ENCODE measurements at regions of chr22 and their contacts with region 1.

Region 1: GRCh38 chr22:46071451-46072109 is 78.7 kb upstream of the PPARA start:
- DNase-seq: peak; percentile 96 to 97 (median 97)
- ATAC-seq: peak; percentile 38 to 59
- H3K4me3 ChIP-seq: peak overlapping the region; percentile 92
- H3K27ac ChIP-seq: peak overlapping the region; percentile 95
- H3K4me1 ChIP-seq: peaks cover 9% of the 10 kb centered on the region
- H3K27me3 ChIP-seq: no peaks in the 10 kb centered on the region

Region 2: GRCh38 chr22:46006379-46007002 is 65.1 kb before region 1 on chr22:
- intact Hi-C with region 1: loop called in 3 of 4 experiments (anchors 5 to 10 kb)
- DNase-seq: peak; percentile 96 to 98 (median 98)
- ATAC-seq: peak; percentile 69 to 75
- H3K4me3 ChIP-seq: no peak overlapping the region
- H3K27ac ChIP-seq: peak overlapping the region; percentile 88
- H3K4me1 ChIP-seq: peaks cover 7% of the 10 kb centered on the region
- H3K27me3 ChIP-seq: no peaks in the 10 kb centered on the region

Region 3: DNA sequence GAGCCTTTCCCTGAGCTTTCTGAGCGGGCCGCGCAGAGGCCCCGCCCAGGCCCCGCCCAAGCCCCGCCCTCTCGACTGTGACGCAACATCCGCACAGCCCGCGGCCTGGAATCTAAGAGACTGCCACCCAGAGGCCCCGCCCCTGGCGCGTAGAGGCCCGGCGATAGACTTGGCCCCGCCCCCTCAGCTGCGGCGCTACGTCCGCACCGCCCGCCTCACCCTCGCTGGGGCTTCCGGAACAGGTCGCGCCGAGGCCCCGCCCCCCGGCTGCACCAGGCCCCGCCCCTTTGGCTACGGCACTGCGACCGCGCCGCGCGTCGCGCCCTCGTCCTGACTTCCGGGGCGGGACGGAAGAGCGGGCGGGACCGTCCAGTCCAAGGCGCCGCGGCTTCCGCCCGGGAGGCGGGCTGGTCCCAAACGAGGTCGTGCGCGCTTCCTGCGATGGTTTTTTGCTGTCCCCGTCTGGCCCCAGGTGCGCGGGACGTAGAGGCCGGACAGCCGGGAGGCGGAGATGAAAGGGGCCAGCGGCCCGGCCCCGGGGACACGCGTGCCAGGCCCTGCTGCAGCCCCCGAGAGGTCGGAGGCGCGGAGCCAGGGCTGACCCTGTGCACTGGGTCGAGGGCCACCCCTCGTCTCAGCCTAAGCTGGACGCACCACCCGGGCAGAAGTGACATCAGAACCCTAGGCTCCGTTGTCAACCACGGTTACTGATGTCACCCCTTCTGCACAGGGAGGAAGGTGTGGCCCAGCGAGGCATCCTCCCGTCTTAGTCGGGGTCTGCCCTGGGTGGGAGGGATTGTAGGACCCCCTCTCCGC is 35.6 kb before region 1 on chr22:
- intact Hi-C with region 1: loop called in 2 of 4 experiments (anchors 5 kb)
- DNase-seq: peak; percentile 100
- ATAC-seq: peak; percentile 97
- H3K4me3 ChIP-seq: peak overlapping the region; percentile 59
- H3K27ac ChIP-seq: peak overlapping the region; percentile 88
- H3K4me1 ChIP-seq: peaks cover 5% of the 10 kb centered on the region
- H3K27me3 ChIP-seq: no peaks in the 10 kb centered on the region

Region 4: DNA sequence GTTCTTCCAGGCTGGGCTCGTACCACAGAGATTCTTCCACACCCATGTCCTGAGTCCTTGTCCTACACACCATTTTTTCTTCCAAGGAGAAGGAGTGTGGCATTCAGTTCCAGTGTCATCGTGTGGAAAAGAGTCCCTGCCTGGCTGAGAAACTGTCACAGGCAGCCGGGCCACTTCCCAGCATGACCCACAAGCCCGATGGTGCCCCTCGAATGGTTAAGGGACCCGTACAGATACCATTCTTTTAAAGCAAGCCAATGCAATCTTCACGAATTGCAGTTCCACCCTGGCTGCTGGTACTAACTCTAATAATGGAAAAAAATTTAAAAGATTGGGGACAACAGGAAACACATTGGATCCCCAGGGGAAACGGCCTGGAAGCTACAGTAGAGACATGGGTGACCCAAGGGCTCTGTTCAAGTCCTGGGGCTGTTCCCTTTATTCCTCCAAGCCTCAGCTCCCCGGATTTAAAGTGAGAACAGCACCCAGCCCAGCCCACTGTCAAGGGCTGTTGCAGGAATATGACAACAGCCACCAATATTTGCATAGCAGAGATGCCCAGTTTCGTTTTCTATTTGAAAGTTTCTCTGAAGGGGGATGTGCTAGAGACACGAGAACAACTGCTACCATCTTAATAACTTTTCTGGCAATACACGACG is 13.7 kb before region 1 on chr22:
- intact Hi-C with region 1: loop called in 1 of 4 experiments (anchors 2 kb)
- DNase-seq: peak in 2 of 3 donors; percentile 64 to 82
- ATAC-seq: peak; percentile 8 to 24
- H3K4me3 ChIP-seq: peak overlapping the region; percentile 38
- H3K27ac ChIP-seq: peak overlapping the region; percentile 98
- H3K4me1 ChIP-seq: peaks cover 11% of the 10 kb centered on the region
- H3K27me3 ChIP-seq: no peaks in the 10 kb centered on the region

Region 5: DNA sequence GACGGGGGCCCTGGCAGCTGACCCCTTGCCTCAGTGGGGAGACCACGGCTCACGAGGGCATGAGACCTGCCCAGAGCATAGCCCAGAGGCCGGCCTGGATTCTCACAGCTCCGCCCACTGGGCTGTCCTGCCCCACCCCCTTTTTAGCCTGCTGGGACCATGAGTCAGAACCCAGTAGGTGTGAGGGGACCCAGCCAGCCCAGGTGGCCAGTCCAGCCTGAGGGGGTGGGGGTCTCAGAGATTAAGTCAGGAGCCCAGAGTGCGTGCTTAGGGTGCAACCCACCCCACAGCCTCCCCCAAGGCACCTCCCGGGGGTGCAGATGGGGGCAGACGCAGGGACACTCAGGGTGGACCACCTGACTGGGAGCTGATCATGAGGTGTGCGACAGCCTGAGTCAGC is 38.6 kb after region 1 on chr22:
- intact Hi-C with region 1: loop called in 2 of 4 experiments (anchors 5 kb)
- DNase-seq: peak in 1 of 3 donors; percentile 62
- ATAC-seq: no peak
- H3K4me3 ChIP-seq: no peak overlapping the region
- H3K27ac ChIP-seq: peak overlapping the region; percentile 19
- H3K4me1 ChIP-seq: peaks cover 25% of the 10 kb centered on the region
- H3K27me3 ChIP-seq: no peaks in the 10 kb centered on the region

Region 6: GRCh38 chr22:46250035-46250782 is 178.6 kb after region 1 on chr22 and contains the start of gene CDPF1:
- intact Hi-C with region 1: no loop called
- DNase-seq: peak; percentile 94 to 98 (median 97)
- ATAC-seq: peak; percentile 96 to 97
- H3K4me3 ChIP-seq: peak within 1 kb of the TSS; percentile 60
- H3K27ac ChIP-seq: peak within 1 kb of the TSS; percentile 98
- H3K4me1 ChIP-seq: peaks cover 12% of the 10 kb centered on the region
- H3K27me3 ChIP-seq: no peaks in the 10 kb centered on the region
- total RNA-seq, gene CDPF1: 8.9 to 10.4 (median 9.2) TPM

Measured in right cardiac atrium (tissue), 5 donors.